HepG2 (cell line): ENCODE measurements at regions of chr16 and their contacts with region 1.

Region 1: DNA sequence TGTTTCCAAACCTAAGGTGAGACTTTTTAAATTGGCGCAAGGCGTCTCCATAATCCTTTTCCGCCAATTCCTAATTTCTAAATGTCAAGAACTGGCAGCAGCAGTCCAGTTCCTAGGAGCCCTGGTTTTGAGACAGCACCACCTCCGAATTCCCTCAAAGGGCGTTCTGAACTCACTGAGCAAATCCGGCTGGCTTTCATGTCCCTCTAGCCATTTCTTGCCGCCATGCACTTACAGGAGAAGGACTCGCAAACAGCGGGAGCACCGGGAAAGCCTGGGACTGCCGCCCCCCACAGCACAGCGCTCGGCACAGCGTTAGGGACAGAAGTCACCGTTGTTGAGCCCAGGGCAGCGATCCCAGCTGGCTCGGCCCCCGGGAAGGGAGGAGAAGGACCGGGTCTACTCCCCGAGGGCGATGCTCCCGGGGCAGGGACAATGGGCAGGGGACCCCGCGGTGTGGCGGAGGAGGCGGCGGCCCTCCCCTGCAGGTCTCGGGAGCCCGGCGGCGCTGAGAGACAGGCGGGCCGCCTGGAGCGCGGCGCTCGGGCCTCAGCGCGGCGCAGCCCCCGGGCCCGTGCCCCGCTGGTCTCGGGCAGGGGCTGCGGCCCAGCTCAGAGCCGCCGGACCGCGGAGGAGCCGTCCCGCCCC is 545 bp downstream of the ARHGAP17 start:
- DNase-seq: peak; percentile 59
- ATAC-seq: peak; percentile 55
- H3K4me3 ChIP-seq: peak overlapping the region; percentile 76 to 95 (median 95)
- H3K27ac ChIP-seq: peak overlapping the region; percentile 77
- H3K4me1 ChIP-seq: peaks cover 47% of the 10 kb centered on the region
- H3K27me3 ChIP-seq: peaks cover 0 to 4% of the 10 kb centered on the region in 2 experiments; a peak in 2 of 5 replicates
- CTCF ChIP-seq: peak; percentile 50
- EP300 ChIP-seq: no peak
- POLR2A ChIP-seq: no peak
- RAD21 ChIP-seq: peak; percentile 50; the same call in 1 of the 2 replicates

Region 2: DNA sequence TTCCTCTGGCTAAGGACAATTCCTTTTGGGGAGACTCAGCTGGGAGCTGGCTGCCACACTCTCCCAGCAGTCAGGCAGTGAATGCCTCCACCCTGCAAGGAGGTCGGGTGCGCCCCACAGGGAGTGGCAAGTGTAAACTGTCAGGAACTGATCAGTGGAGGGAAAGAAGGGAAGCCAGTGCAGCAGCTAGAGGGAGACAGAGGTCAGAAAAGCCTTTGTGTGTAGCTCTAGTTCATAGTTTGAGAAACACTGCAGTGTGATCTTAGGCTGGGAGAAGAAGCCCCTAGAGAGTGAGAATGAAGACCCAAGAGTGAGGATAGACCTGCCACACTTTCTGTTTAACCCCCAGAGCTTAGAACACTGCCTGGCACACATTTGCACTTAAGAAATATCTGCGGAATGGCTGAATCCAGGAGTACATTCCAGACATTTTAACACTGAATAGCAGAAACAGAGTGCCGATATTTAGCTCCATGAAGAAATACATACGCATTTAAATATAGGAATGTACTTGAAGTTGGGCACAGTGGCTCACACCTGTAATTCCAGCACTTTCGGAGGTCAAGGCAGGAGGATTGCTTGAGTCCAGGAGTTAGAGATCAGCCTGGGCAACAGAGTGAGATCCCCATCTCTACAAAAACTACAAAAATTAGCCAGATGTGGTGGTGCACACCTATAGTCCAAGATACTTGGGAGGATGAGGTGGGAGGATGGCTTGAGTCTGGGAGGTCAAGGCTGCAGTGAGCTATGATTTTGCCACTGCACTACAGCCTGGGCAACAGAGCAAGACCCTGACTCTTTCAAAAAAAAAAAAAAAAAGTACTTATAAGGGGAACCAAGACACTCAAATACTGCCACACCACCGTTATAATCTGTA is 179.9 kb before region 1 on chr16:
- CTCF ChIA-PET with region 1: no interaction called
- POLR2A ChIA-PET with region 1: no interaction called
- in situ Hi-C with region 1: no loop called
- intact Hi-C with region 1: loop called (anchors 10 kb)
- DNase-seq: peak; percentile 62
- ATAC-seq: peak; percentile 81
- H3K4me3 ChIP-seq: no peak overlapping the region
- H3K27ac ChIP-seq: no peak overlapping the region
- H3K4me1 ChIP-seq: peaks cover 29% of the 10 kb centered on the region
- H3K27me3 ChIP-seq: no peaks in the 10 kb centered on the region
- CTCF ChIP-seq: peak; percentile 91
- EP300 ChIP-seq: no peak
- POLR2A ChIP-seq: no peak
- RAD21 ChIP-seq: peak; percentile 82

Region 3: DNA sequence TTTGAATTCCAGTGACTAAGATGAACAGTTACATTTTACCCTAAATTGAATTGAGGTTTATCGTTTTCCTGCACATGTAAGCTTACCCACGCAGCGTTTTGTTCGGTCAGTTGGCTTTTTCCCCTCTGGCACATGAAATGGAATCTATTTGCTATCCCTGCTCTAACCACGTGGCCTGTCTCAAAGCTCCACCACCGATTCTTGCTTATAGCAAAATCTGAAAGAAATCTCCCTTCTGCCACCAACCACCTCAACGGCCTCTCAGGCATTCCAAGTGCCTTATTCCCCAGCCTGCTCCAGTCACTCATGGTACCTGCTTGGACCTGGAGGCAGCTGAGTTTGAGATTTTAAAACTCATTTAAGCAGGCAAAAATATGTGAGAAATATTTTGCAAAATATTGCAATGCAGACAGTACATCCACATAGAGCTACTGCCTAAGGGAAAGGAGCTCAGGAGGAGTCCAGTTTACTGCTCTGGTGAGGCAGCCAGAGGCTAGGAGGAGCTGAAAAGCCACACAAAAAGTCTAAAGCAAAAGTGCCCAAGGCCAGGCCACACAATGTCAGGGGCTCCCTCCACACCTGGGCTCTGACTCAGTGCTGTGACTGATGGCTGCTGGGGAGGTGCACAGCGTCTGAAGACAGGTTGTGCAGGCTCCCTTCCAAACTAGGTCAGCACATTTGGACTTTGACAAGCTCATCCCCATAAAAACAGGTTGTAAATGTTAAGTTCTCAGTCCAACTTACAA is 25.9 kb before region 1 on chr16:
- CTCF ChIA-PET with region 1: no interaction called
- POLR2A ChIA-PET with region 1: interaction called, 34 read pairs
- in situ Hi-C with region 1: no loop called
- intact Hi-C with region 1: loop called (anchors 2 kb)
- DNase-seq: peak; percentile 75
- ATAC-seq: peak; percentile 74
- H3K4me3 ChIP-seq: peak overlapping the region in 2 of 3 experiments; percentile 14 to 40; a peak in 2 of 6 replicates
- H3K27ac ChIP-seq: peak overlapping the region; percentile 78
- H3K4me1 ChIP-seq: peaks cover 93% of the 10 kb centered on the region
- H3K27me3 ChIP-seq: no peaks in the 10 kb centered on the region
- CTCF ChIP-seq: no peak
- EP300 ChIP-seq: peak in 1 of 2 experiments; percentile 17; a peak in 1 of 4 replicates
- POLR2A ChIP-seq: no peak
- RAD21 ChIP-seq: no peak

Region 4: DNA sequence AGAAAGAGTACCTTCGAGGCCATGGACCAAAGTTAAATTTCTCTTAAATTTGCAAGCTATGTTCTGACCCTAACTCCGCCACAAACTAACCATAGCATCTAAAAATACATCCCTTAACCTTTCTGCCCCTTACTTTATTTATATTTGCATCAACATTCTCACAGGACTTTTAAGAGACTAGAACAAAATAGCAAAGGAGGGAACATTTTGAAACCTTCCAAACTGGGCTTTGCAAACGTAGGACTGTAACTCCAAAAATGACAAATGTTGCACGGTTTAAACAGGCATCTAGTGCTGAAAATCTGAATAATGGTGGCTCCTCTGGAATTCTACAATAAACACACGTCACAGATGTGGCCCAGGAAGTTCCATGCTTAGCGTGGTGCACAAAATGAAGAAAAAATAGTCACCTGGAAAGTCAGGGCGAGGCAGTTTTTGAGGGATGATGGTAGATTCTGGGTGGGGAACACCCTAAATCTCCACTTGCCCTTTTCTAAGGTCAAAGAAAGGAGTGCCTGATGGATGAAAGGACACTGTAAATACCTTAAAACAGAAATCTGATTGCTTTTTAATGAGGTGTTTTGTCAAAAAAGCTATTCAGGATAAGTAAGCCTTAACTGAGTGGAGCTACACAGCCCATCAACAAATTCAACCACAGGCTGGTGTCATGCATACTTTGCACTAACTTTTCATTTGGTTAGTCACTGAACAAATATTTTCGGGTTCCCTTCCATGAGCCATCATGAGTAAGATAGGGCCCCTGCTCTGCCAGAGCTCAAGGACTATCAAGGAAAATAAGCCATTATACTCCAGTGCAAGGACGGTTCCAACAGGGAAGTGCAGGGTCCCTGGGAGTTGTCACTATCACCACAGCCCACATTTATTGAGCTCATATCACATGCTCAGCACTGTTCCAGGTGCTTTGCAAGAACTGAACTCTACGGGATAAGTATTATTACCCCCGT is 20.6 kb before region 1 on chr16:
- CTCF ChIA-PET with region 1: no interaction called
- POLR2A ChIA-PET with region 1: interaction called, 37 read pairs
- in situ Hi-C with region 1: no loop called
- intact Hi-C with region 1: loop called (anchors 2 kb)
- DNase-seq: peak; percentile 99
- ATAC-seq: peak; percentile 96
- H3K4me3 ChIP-seq: peak overlapping the region in 2 of 3 experiments; percentile 5 to 32; a peak in 2 of 6 replicates
- H3K27ac ChIP-seq: peak overlapping the region; percentile 82
- H3K4me1 ChIP-seq: peaks cover 100% of the 10 kb centered on the region
- H3K27me3 ChIP-seq: no peaks in the 10 kb centered on the region
- CTCF ChIP-seq: no peak
- EP300 ChIP-seq: peak in 1 of 2 experiments; percentile 93; a peak in 2 of 4 replicates
- POLR2A ChIP-seq: no peak; a peak in 1 of 4 replicates
- RAD21 ChIP-seq: no peak

Region 5: GRCh38 chr16:24999856-25000461 is 14.7 kb before region 1 on chr16:
- CTCF ChIA-PET with region 1: no interaction called
- POLR2A ChIA-PET with region 1: interaction called, 37 read pairs
- in situ Hi-C with region 1: no loop called
- intact Hi-C with region 1: loop called (anchors 2 kb)
- DNase-seq: peak; percentile 89
- ATAC-seq: peak; percentile 94
- H3K4me3 ChIP-seq: peak overlapping the region; percentile 4 to 47 (median 5); a peak in 3 of 6 replicates
- H3K27ac ChIP-seq: peak overlapping the region; percentile 72
- H3K4me1 ChIP-seq: peaks cover 76% of the 10 kb centered on the region
- H3K27me3 ChIP-seq: no peaks in the 10 kb centered on the region
- CTCF ChIP-seq: no peak
- EP300 ChIP-seq: peak in 1 of 2 experiments; percentile 33; a peak in 1 of 4 replicates
- POLR2A ChIP-seq: peak in 1 of 2 experiments; percentile 56; a peak in 1 of 4 replicates
- RAD21 ChIP-seq: peak; percentile 4; the same call in 1 of the 2 replicates

Region 6: GRCh38 chr16:25031441-25032307 is 17.1 kb after region 1 on chr16:
- CTCF ChIA-PET with region 1: no interaction called
- POLR2A ChIA-PET with region 1: interaction called, 19 read pairs
- in situ Hi-C with region 1: no loop called
- intact Hi-C with region 1: no loop called
- DNase-seq: peak; percentile 99
- ATAC-seq: peak; percentile 99
- H3K4me3 ChIP-seq: peak overlapping the region; percentile 80 to 85 (median 84)
- H3K27ac ChIP-seq: peak overlapping the region; percentile 31
- H3K4me1 ChIP-seq: peaks cover 48% of the 10 kb centered on the region
- H3K27me3 ChIP-seq: peaks cover 0 to 11% of the 10 kb centered on the region in 2 experiments; a peak in 4 of 5 replicates
- CTCF ChIP-seq: peak; percentile 42
- EP300 ChIP-seq: 0 out of 4 replicates have a peak, but pooled peaks of 1 of the 2 experiments have one; percentile 44
- POLR2A ChIP-seq: peak; percentile 77 to 90
- RAD21 ChIP-seq: peak; percentile 29

Region 7: DNA sequence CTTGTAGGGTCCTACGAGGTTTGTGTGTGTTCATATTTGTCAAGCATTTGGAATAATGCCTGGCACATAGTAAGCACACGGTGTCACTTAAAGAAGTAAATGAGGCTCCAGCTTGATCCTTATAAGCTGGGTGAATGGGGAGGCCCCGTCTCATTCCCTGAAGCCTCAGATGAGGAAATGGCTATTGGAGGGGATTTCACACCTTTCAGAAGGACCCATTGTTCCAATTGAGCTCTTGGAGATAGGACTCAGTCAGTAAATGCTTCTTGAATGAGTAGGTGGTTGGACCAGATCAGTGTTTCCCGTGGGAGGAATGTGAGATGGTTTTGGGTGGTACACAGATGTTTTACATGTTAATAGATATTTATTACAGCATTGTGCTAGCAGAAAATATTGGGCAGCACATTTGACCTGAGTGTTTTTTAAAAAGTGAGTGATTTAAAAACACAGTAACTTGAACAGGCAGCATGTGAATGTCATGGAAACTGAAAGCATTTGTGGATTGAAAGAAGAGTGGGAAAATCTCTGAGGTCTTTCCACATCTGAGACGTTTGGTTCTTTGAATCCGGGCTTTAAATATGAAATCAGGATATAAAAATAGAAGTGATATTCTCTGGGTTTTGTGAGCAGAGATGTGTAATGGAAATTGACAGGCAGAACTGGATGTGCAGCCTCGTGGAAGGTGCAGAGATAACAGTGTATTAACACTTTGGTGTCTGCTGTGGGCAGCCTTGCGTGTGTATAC is 37.0 kb after region 1 on chr16:
- CTCF ChIA-PET with region 1: no interaction called
- POLR2A ChIA-PET with region 1: interaction called, 3 read pairs
- in situ Hi-C with region 1: no loop called
- intact Hi-C with region 1: loop called (anchors 2 kb)
- DNase-seq: no peak
- ATAC-seq: no peak
- H3K4me3 ChIP-seq: peak overlapping the region in 2 of 3 experiments; percentile 14 to 23; a peak in 1 of 6 replicates
- H3K27ac ChIP-seq: no peak overlapping the region
- H3K4me1 ChIP-seq: peaks cover 40% of the 10 kb centered on the region
- H3K27me3 ChIP-seq: peaks cover 0 to 5% of the 10 kb centered on the region in 2 experiments; a peak in 2 of 5 replicates
- CTCF ChIP-seq: no peak
- EP300 ChIP-seq: no peak
- POLR2A ChIP-seq: no peak
- RAD21 ChIP-seq: no peak

Region 8: DNA sequence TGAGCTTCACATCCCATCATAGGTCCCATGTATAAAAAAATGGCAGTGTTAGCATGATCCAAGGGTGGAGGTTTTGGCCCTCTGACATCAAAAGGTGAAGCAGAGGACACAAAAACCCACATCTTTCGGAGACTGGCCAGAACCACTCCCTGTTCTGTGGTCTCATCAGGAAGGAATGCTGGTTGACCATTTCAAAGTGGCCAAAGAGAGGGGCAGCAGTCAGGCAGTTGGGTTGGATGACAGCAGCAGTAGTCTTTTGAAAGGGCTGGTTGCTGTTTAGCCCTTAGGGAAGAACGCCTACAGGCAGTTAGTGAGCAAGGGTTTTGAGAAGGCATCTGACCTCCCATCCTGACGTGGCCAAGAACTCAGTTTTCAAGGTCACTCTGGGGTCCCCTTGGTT is 137.4 kb after region 1 on chr16:
- CTCF ChIA-PET with region 1: no interaction called
- POLR2A ChIA-PET with region 1: no interaction called
- in situ Hi-C with region 1: no loop called
- intact Hi-C with region 1: no loop called
- DNase-seq: no peak
- ATAC-seq: no peak
- H3K4me3 ChIP-seq: no peak overlapping the region
- H3K27ac ChIP-seq: no peak overlapping the region
- H3K4me1 ChIP-seq: peaks cover 6% of the 10 kb centered on the region; the same call in 1 of the 2 replicates
- H3K27me3 ChIP-seq: no peaks in the 10 kb centered on the region
- CTCF ChIP-seq: no peak
- EP300 ChIP-seq: no peak
- POLR2A ChIP-seq: no peak
- RAD21 ChIP-seq: no peak